Activated T-helper 1 cell treated with anti-CD3 and anti-CD28 coated beads, Interleukin-12 subunit alpha, Interleukin-12 subunit beta, Interleukin-2, Interleukin-4 antibody, amounts not matched to agents 30 ng/mL and 10 ng/mL and 1 ng/mL, durations not matched to agents 14 hours and 24 hours and 36 hours (primary cell): ENCODE measurements at regions of chr5 and their contacts with region 1.

Region 1: GRCh38 chr5:170603578-170604565 is 100.1 kb downstream of the KCNIP1 start:
- DNase-seq: peak; percentile 8
- H3K4me3 Mint-ChIP-seq: no peak overlapping the region
- H3K27ac Mint-ChIP-seq: no peak overlapping the region
- H3K4me1 Mint-ChIP-seq: no peaks in the 10 kb centered on the region
- H3K27me3 Mint-ChIP-seq: peaks cover 3% of the 10 kb centered on the region

Region 2: GRCh38 chr5:169745441-169746146 is 858.3 kb before region 1 on chr5:
- intact Hi-C with region 1: no loop called
- DNase-seq: no peak
- H3K4me3 Mint-ChIP-seq: no peak overlapping the region
- H3K27ac Mint-ChIP-seq: peak overlapping the region; percentile 73
- H3K4me1 Mint-ChIP-seq: peaks cover 30% of the 10 kb centered on the region
- H3K27me3 Mint-ChIP-seq: no peaks in the 10 kb centered on the region

Region 3: GRCh38 chr5:170623576-170624181 is 19.8 kb after region 1 on chr5:
- intact Hi-C with region 1: loop called (anchors 1 kb)
- DNase-seq: no peak
- H3K4me3 Mint-ChIP-seq: no peak overlapping the region
- H3K27ac Mint-ChIP-seq: no peak overlapping the region
- H3K4me1 Mint-ChIP-seq: no peaks in the 10 kb centered on the region
- H3K27me3 Mint-ChIP-seq: peaks cover 2% of the 10 kb centered on the region

Region 4: GRCh38 chr5:170633235-170634081 is 29.6 kb after region 1 on chr5:
- intact Hi-C with region 1: loop called (anchors 1 kb)
- DNase-seq: no peak
- H3K4me3 Mint-ChIP-seq: peak overlapping the region; percentile 32
- H3K27ac Mint-ChIP-seq: peak overlapping the region; percentile 3
- H3K4me1 Mint-ChIP-seq: peaks cover 8% of the 10 kb centered on the region
- H3K27me3 Mint-ChIP-seq: peaks cover 13% of the 10 kb centered on the region